BJ (cell line): ENCODE measurements at regions of chr11 and their contacts with region 1.

Region 1: DNA sequence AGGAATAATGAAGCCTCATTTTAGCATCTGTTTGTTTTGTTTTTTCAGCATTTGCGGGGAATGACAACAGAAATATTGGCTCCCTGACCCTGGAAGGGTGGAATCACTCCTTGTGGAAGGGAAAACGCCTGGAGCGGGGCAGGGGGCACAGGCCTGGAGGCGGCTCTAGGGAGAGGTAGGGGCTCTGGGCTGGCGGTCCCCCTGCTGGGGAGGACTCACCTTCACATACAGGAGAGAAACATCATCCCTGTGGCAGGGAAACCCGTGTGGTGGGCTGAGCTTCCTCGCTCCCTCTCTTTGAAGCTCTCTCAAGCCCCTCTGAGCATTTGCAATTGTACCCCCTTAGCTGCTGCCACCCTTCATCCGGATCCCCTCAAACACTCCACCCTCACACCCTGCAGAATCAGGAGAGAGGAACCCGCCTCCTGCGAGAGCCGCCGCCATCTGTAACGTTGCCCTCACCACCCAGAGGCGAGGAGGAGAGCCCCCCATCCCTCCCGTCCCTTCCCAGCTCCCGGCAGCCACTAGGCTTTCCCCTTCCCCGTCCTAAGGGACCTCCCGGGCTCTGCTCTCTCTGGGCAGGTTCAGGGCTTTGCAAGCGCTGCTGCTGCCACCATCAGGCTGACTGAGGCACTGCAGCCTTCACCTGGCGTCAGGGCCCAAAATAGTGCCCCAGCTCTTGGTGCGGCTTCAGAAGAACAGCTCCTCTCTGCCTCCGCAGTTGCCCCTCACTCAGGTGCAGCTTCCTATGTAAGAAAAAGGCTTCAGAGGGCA is 10.4 kb downstream of the KIRREL3 start:
- DNase-seq: no peak
- H3K4me3 ChIP-seq: peak overlapping the region; percentile 17
- H3K27me3 ChIP-seq: no peaks in the 10 kb centered on the region
- CTCF ChIP-seq: peak; percentile 99

Region 2: GRCh38 chr11:126601136-126601535 is 389.0 kb before region 1 on chr11:
- CTCF ChIA-PET with region 1: interaction called, 83 read pairs
- POLR2A ChIA-PET with region 1: no interaction called
- DNase-seq: no peak
- H3K4me3 ChIP-seq: no peak overlapping the region
- H3K27me3 ChIP-seq: no peaks in the 10 kb centered on the region
- CTCF ChIP-seq: no peak

Region 3: DNA sequence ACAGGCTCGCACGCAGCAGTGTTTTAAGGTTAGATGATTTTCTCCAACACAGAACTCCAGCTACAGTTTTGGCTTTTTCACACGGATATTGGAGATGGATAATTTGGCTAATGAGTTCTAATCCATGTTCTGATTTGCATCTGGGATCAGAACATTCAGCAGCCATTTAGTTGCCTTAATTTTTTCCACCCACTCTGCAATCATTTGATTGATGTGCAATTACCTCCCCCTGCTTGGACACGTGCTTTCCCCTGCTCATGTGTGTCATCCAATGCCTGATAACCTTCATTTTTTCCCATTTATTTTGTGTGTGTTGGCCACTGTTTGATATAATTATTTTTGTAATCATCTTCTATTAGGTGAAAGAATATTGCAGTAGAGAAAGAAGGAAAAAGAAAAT is 376.9 kb before region 1 on chr11:
- CTCF ChIA-PET with region 1: interaction called, 83 read pairs
- POLR2A ChIA-PET with region 1: interaction called, 10 read pairs
- DNase-seq: no peak
- H3K4me3 ChIP-seq: no peak overlapping the region
- H3K27me3 ChIP-seq: no peaks in the 10 kb centered on the region
- CTCF ChIP-seq: no peak

Region 4: DNA sequence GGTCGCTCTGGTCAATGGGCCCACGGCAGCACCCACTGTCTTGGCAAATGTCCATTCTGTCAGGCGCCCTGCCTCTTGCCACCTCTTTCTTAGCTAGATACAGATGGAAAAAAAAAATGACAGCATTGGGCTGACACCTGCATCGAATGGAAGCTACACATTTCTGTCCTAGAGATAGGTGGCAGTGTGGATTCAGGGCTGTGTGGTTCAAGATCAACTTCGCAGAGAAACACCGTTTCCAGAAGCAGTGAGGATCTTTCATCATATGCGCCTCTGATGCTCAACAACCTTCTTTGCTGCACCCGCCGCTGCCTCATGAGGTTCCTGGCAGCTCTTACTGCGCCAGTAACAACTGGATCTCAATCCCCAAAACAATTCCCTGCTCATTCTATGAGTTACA is 225.9 kb before region 1 on chr11:
- CTCF ChIA-PET with region 1: interaction called, 12 read pairs
- POLR2A ChIA-PET with region 1: no interaction called
- DNase-seq: no peak
- H3K4me3 ChIP-seq: no peak overlapping the region
- H3K27me3 ChIP-seq: no peaks in the 10 kb centered on the region
- CTCF ChIP-seq: peak; percentile 31; the same call in 1 of the 2 replicates

Region 5: GRCh38 chr11:126969865-126970479 is 20.2 kb before region 1 on chr11:
- CTCF ChIA-PET with region 1: interaction called, 13 read pairs
- POLR2A ChIA-PET with region 1: no interaction called
- DNase-seq: no peak
- H3K4me3 ChIP-seq: no peak overlapping the region
- H3K27me3 ChIP-seq: no peaks in the 10 kb centered on the region
- CTCF ChIP-seq: peak; percentile 85

Region 6: DNA sequence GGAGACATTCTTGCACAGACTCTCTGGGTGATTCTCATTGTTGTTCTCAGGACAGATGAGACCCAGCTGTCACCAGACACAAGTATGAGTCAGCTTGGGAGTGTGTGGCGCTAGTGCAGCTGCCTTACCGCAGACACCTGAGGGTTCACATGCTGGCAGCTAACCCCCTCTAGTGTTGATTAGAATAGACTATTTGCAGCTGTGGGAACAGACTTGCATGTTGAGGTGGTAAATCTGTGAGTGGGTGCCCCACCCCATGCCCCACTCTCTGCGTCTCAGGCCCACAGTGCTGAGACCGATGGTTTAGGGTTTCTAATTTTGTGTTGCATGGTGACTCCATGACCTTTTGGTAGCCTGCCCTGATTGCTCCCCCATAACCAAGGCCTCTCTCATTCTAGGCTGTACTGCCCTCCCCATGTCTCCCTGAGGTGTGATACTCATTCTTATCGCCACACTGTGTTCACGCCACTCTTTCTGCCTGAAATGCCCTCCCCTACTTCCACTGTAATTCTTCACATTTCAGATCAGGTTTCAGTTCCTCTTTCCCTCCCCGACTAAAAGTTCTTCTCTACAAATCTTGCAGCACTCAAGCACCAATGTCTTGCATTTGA is 84.1 kb after region 1 on chr11:
- CTCF ChIA-PET with region 1: interaction called, 25 read pairs
- POLR2A ChIA-PET with region 1: no interaction called
- DNase-seq: peak; percentile 45
- H3K4me3 ChIP-seq: no peak overlapping the region
- H3K27me3 ChIP-seq: peaks cover 11% of the 10 kb centered on the region
- CTCF ChIP-seq: peak; percentile 57